ENCODE measurements at regions of chr16 and their contacts with region 1.

Region 1: DNA sequence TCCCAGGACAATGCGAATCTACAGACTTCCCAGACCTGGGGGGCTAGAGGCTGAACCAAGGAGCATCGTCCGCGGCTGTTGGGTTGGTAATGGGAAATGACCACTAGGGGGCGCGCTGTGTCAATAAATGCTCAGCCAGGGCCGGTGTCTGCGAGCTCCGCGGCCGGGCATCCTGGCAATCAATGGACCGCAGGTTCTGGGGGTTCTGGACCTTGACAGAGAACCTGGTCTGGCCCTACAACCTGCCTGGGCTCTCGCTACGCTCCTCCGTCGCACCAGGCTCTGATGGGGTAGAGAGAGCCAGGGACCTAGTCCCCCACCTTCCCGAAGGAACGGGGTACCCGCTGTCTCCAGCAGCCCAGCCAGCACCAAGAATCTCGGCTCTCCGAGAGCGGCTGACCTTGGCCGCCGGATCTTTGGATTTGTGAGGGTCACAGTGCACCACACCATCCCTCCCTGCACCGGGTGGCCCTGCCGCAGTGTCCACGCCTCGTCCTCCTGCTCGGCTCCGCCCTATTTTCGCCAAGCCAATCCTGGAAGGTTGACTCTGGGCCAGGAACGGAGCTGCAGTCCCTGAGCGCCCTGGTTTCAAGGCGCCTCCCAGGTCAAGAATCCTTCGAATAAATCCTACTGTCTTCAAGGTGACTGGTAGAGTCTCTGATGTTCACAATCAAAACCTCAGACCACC is 20.4 kb upstream of the BEAN1 start:
- DNase-seq: peak; percentile 68
- H3K4me3 ChIP-seq: peak overlapping the region; percentile 40 to 60 (median 58)
- H3K27ac ChIP-seq: peak overlapping the region; percentile 98
- H3K4me1 ChIP-seq: peaks cover 23% of the 10 kb centered on the region
- H3K27me3 ChIP-seq: no peaks in the 10 kb centered on the region
- CTCF ChIP-seq: peak; percentile 82 to 83

Region 2: GRCh38 chr16:66483689-66484481 is 77.2 kb after region 1 on chr16:
- CTCF ChIA-PET with region 1: interaction called, 4 read pairs
- dilution Hi-C with region 1: no loop called
- in situ Hi-C with region 1: loop called (anchors 5 kb)
- intact Hi-C with region 1: loop called (anchors 1 kb)
- DNase-seq: peak; percentile 51
- H3K4me3 ChIP-seq: no peak overlapping the region
- H3K27ac ChIP-seq: no peak overlapping the region
- H3K4me1 ChIP-seq: peaks cover 38% of the 10 kb centered on the region
- H3K27me3 ChIP-seq: no peaks in the 10 kb centered on the region
- CTCF ChIP-seq: peak; percentile 98 to 99

Region 3: GRCh38 chr16:66552286-66553177 is 145.9 kb after region 1 on chr16 and contains the start of gene CKLF:
- CTCF ChIA-PET with region 1: interaction called, 5 read pairs
- dilution Hi-C with region 1: no loop called
- in situ Hi-C with region 1: no loop called
- intact Hi-C with region 1: loop called (anchors 1 kb)
- DNase-seq: peak; percentile 84
- H3K4me3 ChIP-seq: peak within 1 kb of the TSS; percentile 53 to 61 (median 59)
- H3K27ac ChIP-seq: peak within 1 kb of the TSS; percentile 13
- H3K4me1 ChIP-seq: peaks cover 32% of the 10 kb centered on the region
- H3K27me3 ChIP-seq: no peaks in the 10 kb centered on the region
- CTCF ChIP-seq: no peak
- total RNA-seq, gene CKLF: 26.8 to 46.6 TPM

Region 4: DNA sequence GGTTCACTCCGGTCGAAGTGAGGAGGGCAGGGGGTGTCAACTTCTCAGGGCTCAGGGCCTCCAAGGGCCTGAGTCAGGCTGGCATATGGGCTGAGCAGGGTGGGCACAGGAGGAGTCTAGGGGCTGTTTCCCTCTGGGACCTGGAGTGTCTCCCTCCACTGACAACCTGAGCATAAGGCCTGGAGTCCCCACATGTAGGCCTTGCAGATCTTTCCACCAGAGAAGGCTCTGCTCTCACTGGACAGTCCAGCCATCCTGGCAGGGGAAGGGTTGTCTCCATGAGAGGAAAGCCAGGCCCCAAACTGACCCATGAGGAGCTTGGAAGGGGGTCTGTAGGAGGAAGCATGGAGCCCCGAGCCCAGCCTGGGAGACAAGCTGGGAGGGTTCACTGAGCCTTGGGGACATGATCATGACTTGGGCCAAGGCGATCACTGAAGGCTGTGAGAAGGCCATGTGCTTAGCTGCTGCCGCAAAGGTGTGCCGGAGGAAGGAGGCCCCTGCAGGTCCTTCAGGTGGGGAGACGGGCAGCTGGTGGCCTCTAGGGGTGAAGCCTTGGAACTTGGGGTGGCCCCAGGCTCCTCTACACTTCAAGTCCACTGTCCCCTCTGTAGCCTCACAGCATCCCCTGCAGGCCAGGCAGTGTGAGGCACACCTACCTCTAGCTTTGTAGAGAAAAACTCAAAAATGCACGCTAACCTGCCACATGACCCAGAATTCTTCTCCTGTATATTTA is 182.5 kb after region 1 on chr16:
- CTCF ChIA-PET with region 1: no interaction called
- dilution Hi-C with region 1: loop called (anchors 5 kb)
- in situ Hi-C with region 1: no loop called
- intact Hi-C with region 1: loop called (anchors 1 kb)
- DNase-seq: peak; percentile 19
- H3K4me3 ChIP-seq: no peak overlapping the region
- H3K27ac ChIP-seq: no peak overlapping the region
- H3K4me1 ChIP-seq: no peaks in the 10 kb centered on the region
- H3K27me3 ChIP-seq: no peaks in the 10 kb centered on the region
- CTCF ChIP-seq: peak; percentile 72 to 75

Region 5: GRCh38 chr16:66608241-66609138 is 201.8 kb after region 1 on chr16:
- CTCF ChIA-PET with region 1: no interaction called
- dilution Hi-C with region 1: no loop called
- in situ Hi-C with region 1: loop called in 1 of 2 experiments (anchors 10 kb)
- intact Hi-C with region 1: loop called (anchors 1 kb)
- DNase-seq: peak; percentile 80
- H3K4me3 ChIP-seq: no peak overlapping the region
- H3K27ac ChIP-seq: no peak overlapping the region
- H3K4me1 ChIP-seq: peaks cover 29% of the 10 kb centered on the region
- H3K27me3 ChIP-seq: no peaks in the 10 kb centered on the region
- CTCF ChIP-seq: peak; percentile 85 to 98

Region 6: DNA sequence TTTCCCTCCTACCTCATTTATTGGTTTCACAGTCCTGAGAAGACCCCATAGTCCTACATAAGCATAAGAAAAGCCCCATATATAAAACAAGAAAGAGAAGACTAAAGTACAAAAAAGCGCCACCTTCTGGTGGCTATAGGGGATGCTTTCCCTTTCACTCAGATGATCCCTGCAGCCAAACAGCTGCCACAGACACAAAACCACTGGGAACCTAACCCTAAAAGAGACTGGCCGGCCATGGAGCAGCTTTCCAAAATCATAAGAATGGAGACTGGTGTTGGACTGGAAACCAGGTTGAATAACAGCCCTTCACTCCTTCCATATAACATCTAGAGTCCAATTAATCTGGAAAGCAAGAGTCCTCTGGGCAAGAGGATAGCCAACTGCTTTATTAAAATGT is 333.3 kb after region 1 on chr16:
- CTCF ChIA-PET with region 1: interaction called, 8 read pairs
- dilution Hi-C with region 1: no loop called
- in situ Hi-C with region 1: no loop called
- intact Hi-C with region 1: loop called (anchors 2 kb)
- DNase-seq: peak; percentile 23
- H3K4me3 ChIP-seq: no peak overlapping the region
- H3K27ac ChIP-seq: no peak overlapping the region
- H3K4me1 ChIP-seq: peaks cover 34% of the 10 kb centered on the region
- H3K27me3 ChIP-seq: no peaks in the 10 kb centered on the region
- CTCF ChIP-seq: peak; percentile 59 to 72